T-cell (primary cell): ENCODE measurements at regions of chr7 and their contacts with region 1.

Region 1: DNA sequence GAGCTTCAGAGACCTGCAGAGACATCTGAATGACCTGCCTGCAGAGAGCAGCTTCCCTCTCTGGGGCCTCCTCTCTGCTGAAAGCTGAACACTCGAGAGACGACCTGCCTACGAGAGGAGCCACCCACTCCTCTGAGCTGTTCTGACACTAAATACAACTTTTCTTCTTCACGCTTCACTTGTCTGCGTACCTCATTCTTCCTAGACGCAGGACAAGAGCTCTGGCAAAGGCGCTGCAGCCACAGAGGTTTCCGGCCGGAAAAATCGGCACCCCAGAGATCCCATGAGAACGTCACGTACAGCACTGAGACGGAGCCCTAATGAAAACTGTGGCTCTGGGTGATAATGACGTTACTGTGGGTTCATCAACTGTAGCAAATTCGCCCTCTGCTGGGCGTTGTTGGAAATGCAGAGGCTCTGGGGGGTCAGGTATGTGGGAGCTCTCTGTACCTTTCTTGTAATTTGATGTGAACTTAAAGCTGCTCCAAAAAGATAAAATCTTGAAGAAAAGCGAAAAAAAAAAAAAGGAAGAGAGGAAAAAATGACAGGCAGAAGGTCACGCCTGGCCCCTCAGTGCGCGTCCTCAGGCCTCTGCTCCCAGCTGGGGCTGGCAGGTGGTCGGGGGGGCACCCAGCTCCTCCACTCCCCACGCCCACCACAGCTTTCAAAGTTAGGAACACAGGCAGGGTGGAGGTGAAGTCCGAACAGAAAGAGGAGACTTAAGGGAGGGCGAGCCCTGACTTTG is 120.7 kb downstream of the DYNC2I1 start:
- DNase-seq: peak; percentile 63 to 94 (median 86)
- ATAC-seq: peak; percentile 80 to 85 (median 80)
- H3K4me3 ChIP-seq: peak overlapping the region; percentile 47 to 77
- H3K4me3 Mint-ChIP-seq: peak overlapping the region; percentile 81 to 85 (median 85)
- H3K27ac ChIP-seq: peak overlapping the region; percentile 50
- H3K27ac Mint-ChIP-seq: peak overlapping the region; percentile 86 to 88
- H3K4me1 ChIP-seq: peaks cover 6 to 31% of the 10 kb centered on the region in 2 experiments
- H3K4me1 Mint-ChIP-seq: peaks cover 12 to 21% (median 21%) of the 10 kb centered on the region in 3 donors
- H3K27me3 ChIP-seq: peaks cover 0 to 7% of the 10 kb centered on the region in 2 experiments
- H3K27me3 Mint-ChIP-seq: no peaks in the 10 kb centered on the region

Region 2: DNA sequence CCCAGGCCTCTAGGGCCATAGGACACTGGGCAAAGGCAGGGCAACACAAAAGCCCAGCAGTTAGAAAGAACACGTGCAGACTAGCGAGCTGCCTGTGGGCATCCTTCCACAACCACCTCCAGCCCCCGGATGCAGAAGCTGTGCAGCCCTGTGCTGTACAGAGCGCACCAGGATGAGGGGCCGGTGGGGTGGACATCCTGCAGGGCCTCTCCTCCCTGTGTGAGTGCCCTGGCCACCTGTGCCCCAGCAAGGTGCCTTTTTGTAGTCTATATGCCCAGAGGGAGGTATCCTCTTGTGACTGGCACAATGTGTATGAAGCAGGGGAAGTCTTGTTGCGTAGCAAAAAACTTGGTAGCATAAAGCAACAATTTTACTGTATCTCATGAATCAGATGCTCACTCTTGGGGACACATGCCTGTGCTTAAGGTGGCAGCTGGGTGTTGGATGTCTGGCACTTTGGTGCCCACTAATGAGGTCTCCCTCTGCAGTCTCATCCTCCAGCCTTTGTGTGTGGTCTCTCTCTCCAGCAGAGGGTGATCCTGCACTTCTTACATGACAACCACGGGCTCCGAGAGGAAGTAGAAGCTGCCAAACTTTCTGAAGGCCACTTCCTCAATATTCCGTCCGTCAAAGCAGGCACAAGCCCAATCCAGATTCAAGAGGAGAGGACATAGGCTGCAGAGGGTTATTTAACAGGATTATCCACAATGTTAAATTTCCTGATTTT is 281.1 kb before region 1 on chr7:
- CTCF ChIA-PET with region 1: interaction called, 23 to 68 read pairs
- POLR2A ChIA-PET with region 1: no interaction called
- DNase-seq: peak in 32 of 35 experiments; percentile 6 to 81 (median 38)
- ATAC-seq: peak; percentile 89 to 99 (median 98)
- H3K4me3 ChIP-seq: no peak overlapping the region
- H3K4me3 Mint-ChIP-seq: peak overlapping the region in 2 of 3 donors; percentile 32 to 50
- H3K27ac ChIP-seq: no peak overlapping the region
- H3K27ac Mint-ChIP-seq: peak overlapping the region; percentile 45 to 63
- H3K4me1 ChIP-seq: peaks cover 0 to 10% of the 10 kb centered on the region in 2 experiments
- H3K4me1 Mint-ChIP-seq: peaks cover 5 to 21% (median 10%) of the 10 kb centered on the region in 3 donors
- H3K27me3 ChIP-seq: no peaks in the 10 kb centered on the region
- H3K27me3 Mint-ChIP-seq: no peaks in the 10 kb centered on the region

Region 3: GRCh38 chr7:158931804-158932298 is 45.2 kb before region 1 on chr7:
- CTCF ChIA-PET with region 1: no interaction called
- POLR2A ChIA-PET with region 1: no interaction called
- DNase-seq: no peak
- ATAC-seq: no peak
- H3K4me3 ChIP-seq: no peak overlapping the region
- H3K4me3 Mint-ChIP-seq: no peak overlapping the region
- H3K27ac ChIP-seq: no peak overlapping the region
- H3K27ac Mint-ChIP-seq: no peak overlapping the region
- H3K4me1 ChIP-seq: no peaks in the 10 kb centered on the region
- H3K4me1 Mint-ChIP-seq: no peaks in the 10 kb centered on the region
- H3K27me3 ChIP-seq: no peaks in the 10 kb centered on the region
- H3K27me3 Mint-ChIP-seq: no peaks in the 10 kb centered on the region

Region 4: DNA sequence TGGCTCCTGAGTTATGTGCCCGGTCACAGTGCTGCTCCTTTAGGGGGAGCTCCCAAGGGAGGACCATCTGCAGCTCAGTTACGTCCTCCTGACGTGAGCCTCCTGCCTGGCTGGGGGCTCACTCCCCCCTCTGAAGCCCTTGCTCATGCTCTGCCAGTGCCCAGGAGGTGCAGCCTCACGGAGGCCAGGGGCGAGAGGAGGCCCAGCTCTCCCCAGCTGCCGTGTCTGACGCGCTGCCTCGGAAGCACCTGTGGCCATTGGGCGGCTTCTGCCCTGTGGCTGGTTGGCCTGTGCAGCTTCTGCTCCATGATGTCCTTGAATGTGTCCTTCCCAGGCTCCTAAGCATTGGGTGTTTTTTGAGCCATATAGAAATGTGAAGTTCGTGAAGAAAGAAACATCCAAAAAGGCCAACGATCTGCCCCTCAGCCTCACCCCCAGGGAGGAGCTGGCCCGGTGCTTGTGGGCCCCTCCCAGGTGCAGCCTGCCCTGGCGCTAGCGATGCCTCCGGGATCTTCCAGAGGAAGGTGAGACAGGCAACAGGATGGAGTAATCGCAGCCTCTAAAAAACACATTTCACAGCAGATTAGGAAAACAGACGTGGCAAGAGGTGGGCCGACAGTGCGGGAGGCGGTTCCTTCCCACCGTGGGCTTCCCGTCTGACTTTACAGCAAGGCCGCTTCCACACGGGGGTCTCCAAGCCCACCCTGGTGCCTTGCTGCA is 29.3 kb before region 1 on chr7:
- CTCF ChIA-PET with region 1: no interaction called
- POLR2A ChIA-PET with region 1: no interaction called
- DNase-seq: peak in 1 of 35 experiments; percentile 22
- ATAC-seq: no peak
- H3K4me3 ChIP-seq: no peak overlapping the region
- H3K4me3 Mint-ChIP-seq: no peak overlapping the region
- H3K27ac ChIP-seq: no peak overlapping the region
- H3K27ac Mint-ChIP-seq: no peak overlapping the region
- H3K4me1 ChIP-seq: no peaks in the 10 kb centered on the region
- H3K4me1 Mint-ChIP-seq: no peaks in the 10 kb centered on the region
- H3K27me3 ChIP-seq: no peaks in the 10 kb centered on the region
- H3K27me3 Mint-ChIP-seq: no peaks in the 10 kb centered on the region